ENCODE measurements at regions of chr2 and their contacts with region 1.

Region 1: DNA sequence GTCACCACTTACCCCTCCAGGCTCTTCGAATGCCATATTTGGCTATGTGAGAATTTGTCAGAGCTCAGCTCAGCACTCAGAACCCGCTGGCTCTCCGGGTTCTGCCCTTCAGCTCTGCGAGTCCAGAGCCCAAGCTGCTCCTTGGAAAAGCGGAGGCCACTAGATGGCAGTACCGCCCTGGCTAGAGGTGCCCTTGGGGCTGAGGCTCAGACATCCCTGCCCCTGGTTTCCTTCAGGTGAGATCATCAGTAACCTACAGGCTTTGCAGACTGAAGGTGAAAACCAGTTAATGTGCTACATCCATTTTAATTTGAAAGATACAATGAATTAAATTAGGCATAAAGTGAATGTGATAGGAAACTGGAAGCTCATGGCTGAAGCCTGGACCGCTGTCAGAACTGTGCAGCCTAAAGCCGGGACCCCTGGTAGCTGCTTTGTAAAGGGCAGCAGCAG is 285.6 kb downstream of the AGAP1 start:
- DNase-seq: peak; percentile 83
- ATAC-seq: peak; percentile 71
- H3K4me3 Mint-ChIP-seq: no peak overlapping the region
- H3K27ac Mint-ChIP-seq: no peak overlapping the region
- H3K4me1 Mint-ChIP-seq: no peaks in the 10 kb centered on the region
- H3K27me3 Mint-ChIP-seq: peaks cover 11% of the 10 kb centered on the region
- CTCF ChIP-seq: peak; percentile 76

Region 2: DNA sequence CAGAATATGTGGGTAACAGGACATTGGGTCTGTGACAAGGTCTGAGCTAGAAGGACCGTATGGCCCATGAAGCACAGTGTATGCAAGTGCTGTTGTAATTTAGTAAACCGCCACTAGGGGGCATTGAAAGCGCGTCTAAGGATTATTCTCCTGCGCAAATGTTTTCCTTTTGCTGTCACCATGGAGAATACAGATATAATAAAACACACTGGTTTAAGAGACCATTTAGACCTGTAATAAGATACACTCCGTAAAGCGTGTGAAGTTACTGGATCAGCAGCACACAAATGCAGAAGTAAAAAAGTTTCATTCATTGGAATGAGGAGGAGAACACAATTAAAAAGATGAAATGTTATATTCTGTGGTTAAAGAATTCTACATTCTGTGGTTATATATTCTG is 13.2 kb before region 1 on chr2:
- CTCF ChIA-PET with region 1: interaction called, 28 read pairs
- POLR2A ChIA-PET with region 1: no interaction called
- intact Hi-C with region 1: no loop called
- DNase-seq: peak; percentile 59
- ATAC-seq: peak; percentile 74
- H3K4me3 Mint-ChIP-seq: no peak overlapping the region
- H3K27ac Mint-ChIP-seq: no peak overlapping the region
- H3K4me1 Mint-ChIP-seq: peaks cover 4% of the 10 kb centered on the region
- H3K27me3 Mint-ChIP-seq: no peaks in the 10 kb centered on the region
- CTCF ChIP-seq: peak; percentile 96

Region 3: DNA sequence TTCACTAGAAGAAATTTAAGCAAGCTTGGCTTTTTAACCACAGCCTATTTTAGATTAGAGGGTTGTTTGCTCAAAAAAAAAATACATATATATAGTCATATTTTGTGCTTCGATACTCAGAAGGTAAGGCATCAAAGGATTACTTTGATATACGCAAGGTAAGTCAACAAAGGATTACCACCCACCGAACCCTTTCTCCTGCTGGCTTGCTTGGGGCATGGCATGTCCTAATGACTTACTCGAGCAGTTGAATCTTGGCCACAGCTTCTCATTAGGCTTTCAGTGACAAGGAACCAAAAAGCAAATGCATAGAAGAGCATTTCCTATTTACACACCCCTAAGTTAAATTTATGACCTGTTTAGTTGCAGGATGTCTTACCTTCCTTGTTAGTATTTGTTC is 10.1 kb after region 1 on chr2:
- CTCF ChIA-PET with region 1: interaction called, 11 read pairs
- POLR2A ChIA-PET with region 1: interaction called, 4 read pairs
- intact Hi-C with region 1: no loop called
- DNase-seq: no peak
- ATAC-seq: no peak
- H3K4me3 Mint-ChIP-seq: no peak overlapping the region
- H3K27ac Mint-ChIP-seq: no peak overlapping the region
- H3K4me1 Mint-ChIP-seq: peaks cover 2% of the 10 kb centered on the region
- H3K27me3 Mint-ChIP-seq: peaks cover 12% of the 10 kb centered on the region
- CTCF ChIP-seq: no peak